Sciatic nerve (tissue), 2 donors: ENCODE measurements at regions of chr4 and their contacts with region 1.

Region 1: GRCh38 chr4:27168559-27169182 is 308.0 kb downstream of the STIM2 start:
- DNase-seq: no peak
- ATAC-seq: no peak

Region 2: GRCh38 chr4:27094783-27095182 is 73.9 kb before region 1 on chr4:
- intact Hi-C with region 1: loop called (anchors 2 kb)
- DNase-seq: no peak
- ATAC-seq: no peak

Region 3: GRCh38 chr4:27148211-27148921 is 20.3 kb before region 1 on chr4:
- intact Hi-C with region 1: no loop called
- DNase-seq: no peak
- ATAC-seq: no peak

Region 4: DNA sequence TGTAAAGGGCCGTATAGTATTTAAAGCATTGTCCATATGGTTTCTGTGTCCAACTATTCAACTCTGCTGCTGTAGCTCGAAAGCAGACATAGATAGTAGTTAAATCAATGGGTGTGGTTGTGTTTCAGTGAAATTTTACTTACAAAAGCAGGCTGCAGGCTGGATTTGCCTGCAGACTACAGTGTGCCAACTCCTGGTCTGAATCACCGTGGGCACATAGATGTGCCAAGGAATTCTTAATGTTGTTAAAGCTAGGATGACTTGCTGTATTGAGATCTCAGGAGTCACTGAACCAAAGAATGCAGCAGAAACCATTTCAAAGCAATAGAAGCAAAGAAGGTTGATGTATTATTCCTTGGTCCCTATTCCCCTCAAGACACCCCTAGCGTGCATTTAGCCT is 71.0 kb after region 1 on chr4:
- intact Hi-C with region 1: no loop called
- DNase-seq: no peak
- ATAC-seq: no peak

Region 5: DNA sequence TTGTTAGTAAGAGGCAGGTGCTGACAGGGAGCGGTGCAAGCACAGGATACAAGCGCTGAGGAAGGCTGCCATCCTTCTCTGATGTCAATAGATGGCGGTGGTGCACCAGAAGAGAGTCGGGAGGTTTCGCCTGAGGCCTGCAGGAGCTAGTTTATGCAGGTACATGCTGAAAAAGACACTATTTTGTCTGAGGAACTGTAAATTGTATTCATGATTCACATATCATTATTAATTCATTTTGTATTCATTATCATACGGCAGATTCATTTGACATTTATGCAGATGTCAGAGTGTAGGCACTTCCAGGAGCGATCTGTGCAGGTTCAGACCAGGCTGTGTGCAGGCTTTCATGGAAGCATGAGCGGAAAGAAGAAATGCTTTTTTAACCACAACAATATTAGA is 515.9 kb after region 1 on chr4:
- intact Hi-C with region 1: no loop called
- DNase-seq: peak; percentile 67
- ATAC-seq: peak; percentile 72